Activated CD4-positive, alpha-beta T cell treated with anti-CD3 and anti-CD28 coated beads, Interleukin-2, amount 10 ng/mL, durations not matched to agents 24 days and 14 days (primary cell): ENCODE measurements at regions of chr10 and their contacts with region 1.

Region 1: DNA sequence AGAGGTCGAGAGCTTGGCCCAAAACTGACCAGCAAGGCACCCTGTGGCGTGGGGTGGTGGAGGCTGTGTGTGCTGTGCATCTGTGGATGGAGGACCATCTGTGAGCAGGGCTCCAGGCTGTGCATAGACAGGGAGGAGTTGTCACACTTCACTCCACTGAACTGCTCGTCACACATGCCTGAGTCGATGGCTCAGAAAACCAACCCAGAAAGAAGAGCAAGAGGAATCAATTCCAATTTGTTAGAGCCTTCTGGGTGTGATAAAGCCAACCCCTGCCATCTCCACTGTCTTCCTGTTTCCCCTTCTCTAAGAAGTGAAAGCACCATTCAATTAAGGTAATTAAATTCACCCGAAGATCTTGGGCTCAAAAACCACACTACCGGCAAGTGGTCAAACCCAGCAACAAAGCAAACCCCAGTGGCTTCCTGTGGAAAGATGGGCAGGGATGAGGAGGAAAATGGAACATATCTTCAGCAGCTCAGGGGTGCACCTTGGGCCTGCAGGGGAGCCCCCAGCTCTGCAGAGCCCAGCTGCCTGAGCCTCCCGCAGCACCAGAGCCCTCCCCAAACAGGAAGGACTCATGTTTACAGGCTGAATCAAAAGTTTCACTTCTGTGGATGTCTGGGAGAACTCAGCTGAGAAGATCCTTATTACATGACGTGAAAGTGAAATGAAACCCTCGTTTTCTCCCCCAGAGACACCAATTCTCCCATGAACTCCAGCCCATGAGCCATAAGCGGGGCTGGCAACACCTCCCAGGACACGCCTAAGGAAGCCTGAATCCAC is 10.8 kb downstream of the C10orf71 start:
- DNase-seq: peak; percentile 76
- H3K4me3 Mint-ChIP-seq: peak overlapping the region; percentile 11
- H3K27ac Mint-ChIP-seq: peak overlapping the region; percentile 25
- H3K4me1 Mint-ChIP-seq: peaks cover 19% of the 10 kb centered on the region
- H3K27me3 Mint-ChIP-seq: peaks cover 6% of the 10 kb centered on the region

Region 2: DNA sequence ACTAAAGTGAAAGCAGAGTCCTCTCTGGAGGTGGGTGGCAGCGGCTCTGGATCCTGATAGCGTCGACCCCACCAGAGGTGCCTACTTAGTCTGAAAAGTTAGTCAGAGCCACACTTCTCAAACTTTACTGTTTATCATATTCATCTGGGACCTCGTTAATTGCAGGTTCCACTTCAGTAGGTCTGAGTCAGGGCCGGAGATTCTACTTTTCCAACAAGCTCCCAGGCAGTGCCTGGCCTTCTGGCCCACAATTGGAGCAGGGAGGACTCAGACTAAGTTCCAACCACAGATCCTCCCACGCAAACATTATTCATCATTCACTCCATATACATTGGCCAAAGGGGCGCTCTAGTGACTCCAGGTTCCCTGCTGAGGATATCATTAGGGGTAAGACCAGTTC is 272.6 kb before region 1 on chr10:
- intact Hi-C with region 1: no loop called
- DNase-seq: no peak
- H3K4me3 Mint-ChIP-seq: no peak overlapping the region
- H3K27ac Mint-ChIP-seq: no peak overlapping the region
- H3K4me1 Mint-ChIP-seq: no peaks in the 10 kb centered on the region
- H3K27me3 Mint-ChIP-seq: no peaks in the 10 kb centered on the region

Region 3: DNA sequence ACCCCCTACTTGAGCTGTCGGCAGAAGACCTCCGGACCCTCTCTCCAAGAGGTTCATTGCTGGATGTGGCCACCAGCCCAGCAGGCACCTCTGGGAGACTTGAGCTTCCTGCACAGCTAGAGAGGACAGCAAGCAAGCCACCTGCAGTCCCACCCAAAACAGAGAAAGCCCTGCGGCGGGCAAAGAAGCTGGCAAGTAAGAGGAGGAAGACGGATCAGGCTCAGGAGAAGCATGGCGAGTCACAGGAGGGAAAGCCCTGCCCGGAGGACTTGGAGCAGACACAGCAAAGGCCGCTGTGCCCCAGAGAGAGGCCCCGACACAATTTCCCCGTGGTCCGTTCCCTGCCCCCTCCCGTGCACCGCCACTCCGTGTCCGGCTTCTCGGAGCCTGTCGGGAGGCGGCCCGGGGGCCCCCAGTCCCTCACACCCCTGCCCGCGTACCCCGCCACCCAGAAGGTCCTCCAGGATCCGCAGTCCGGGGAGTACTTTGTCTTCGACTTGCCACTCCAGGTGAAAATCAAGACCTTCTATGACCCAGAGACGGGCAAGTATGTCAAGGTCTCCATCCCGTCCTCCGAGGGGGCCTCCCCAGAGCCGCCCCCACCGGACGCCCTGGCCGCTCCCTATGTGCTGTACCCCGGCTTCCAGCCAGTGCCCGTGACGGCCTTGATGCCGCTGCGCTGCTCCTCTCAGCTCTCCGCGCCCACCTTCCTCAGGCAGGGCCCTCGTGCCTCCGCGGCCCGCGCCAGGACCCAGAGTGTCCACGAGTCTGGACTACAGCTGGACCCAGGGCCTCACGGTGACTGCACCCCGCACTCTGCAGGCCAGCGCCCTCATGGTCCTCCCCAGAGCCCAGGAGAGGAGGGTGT is 16.3 kb after region 1 on chr10:
- intact Hi-C with region 1: no loop called
- DNase-seq: no peak
- H3K4me3 Mint-ChIP-seq: no peak overlapping the region
- H3K27ac Mint-ChIP-seq: no peak overlapping the region
- H3K4me1 Mint-ChIP-seq: no peaks in the 10 kb centered on the region
- H3K27me3 Mint-ChIP-seq: peaks cover 2% of the 10 kb centered on the region

Region 4: GRCh38 chr10:49359349-49360270 is 49.8 kb after region 1 on chr10:
- intact Hi-C with region 1: loop called (anchors 5 kb)
- DNase-seq: no peak
- H3K4me3 Mint-ChIP-seq: no peak overlapping the region
- H3K27ac Mint-ChIP-seq: no peak overlapping the region
- H3K4me1 Mint-ChIP-seq: peaks cover 5% of the 10 kb centered on the region
- H3K27me3 Mint-ChIP-seq: peaks cover 2% of the 10 kb centered on the region